ENCODE measurements at regions of chr22 and their contacts with region 1.

Region 1: DNA sequence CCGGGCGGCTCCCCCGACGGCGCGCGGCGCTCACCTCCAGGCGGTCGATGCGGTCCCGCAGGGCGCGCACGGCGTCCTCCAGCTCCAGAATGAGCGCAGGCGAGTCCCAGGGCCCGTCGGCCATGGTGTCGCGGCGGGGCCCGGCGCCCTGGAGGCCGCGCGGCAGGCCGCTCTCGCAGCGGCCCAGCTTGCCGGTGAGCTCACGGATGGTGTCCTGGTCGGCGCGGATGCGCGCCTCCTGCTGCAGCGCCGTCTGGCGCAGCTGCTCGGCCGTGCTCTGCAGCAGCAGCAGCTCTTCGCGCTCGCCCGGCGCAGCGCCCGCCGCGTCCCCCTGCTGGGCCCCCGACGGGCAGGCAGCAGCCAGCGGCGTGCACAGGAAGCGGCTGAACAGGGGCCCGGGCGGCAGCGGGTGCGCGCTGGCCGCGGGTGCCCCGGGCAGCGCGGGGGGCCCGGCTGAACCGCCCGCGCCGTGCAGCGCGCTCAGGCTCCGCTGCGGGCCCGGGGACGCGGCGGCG is 570 bp downstream of the NPTXR start:
- DNase-seq: peak; percentile 55 to 68
- ATAC-seq: peak; percentile 88 to 90
- H3K4me3 ChIP-seq: peak overlapping the region; percentile 74
- H3K27ac ChIP-seq: peak overlapping the region; percentile 69 to 94
- H3K4me1 ChIP-seq: peaks cover 22% of the 10 kb centered on the region; the same call in 2 of the 3 replicates
- CTCF ChIP-seq: peak; percentile 34; the same call in 2 of the 3 replicates
- EP300 ChIP-seq: no peak
- POLR2A ChIP-seq: no peak
- RAD21 ChIP-seq: peak in 1 of 2 experiments; percentile 45; a peak in 2 of 5 replicates

Region 2: DNA sequence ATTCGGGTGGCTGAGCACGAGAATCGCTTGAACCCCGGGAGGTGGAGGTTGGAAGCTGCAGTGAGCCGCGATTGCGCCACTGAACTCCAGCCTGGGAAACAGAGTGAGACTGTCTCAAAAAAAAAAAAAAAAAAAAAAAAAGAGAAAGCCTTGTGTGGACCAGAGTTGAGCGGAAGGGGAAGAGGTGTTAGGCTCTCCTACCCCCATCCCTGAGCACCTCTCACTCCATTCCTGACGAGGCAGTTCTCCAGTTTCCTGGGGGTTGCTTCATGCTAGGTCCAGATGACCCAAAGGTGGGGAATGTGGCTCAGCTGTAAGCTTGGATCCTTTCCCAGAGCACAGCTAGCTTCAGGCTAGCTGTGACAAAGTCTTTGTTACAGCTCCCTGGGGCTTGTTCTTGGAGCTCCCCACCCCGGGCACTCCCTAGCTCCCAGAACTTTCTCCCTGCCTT is 40.6 kb before region 1 on chr22:
- CTCF ChIA-PET with region 1: interaction called, 4 read pairs
- POLR2A ChIA-PET with region 1: interaction called, 13 read pairs
- DNase-seq: peak; percentile 79 to 86
- ATAC-seq: peak; percentile 95 to 99
- H3K4me3 ChIP-seq: no peak overlapping the region
- H3K27ac ChIP-seq: peak overlapping the region; percentile 75 to 80
- H3K4me1 ChIP-seq: peaks cover 19% of the 10 kb centered on the region
- CTCF ChIP-seq: no peak
- EP300 ChIP-seq: peak in 1 of 2 experiments; percentile 14; a peak in 1 of 5 replicates
- POLR2A ChIP-seq: no peak
- RAD21 ChIP-seq: peak in 1 of 2 experiments; percentile 26; a peak in 1 of 5 replicates

Region 3: GRCh38 chr22:38881464-38881871 is 38.2 kb after region 1 on chr22:
- CTCF ChIA-PET with region 1: no interaction called
- POLR2A ChIA-PET with region 1: no interaction called
- DNase-seq: no peak
- ATAC-seq: no peak; a peak in 1 of 6 replicates
- H3K4me3 ChIP-seq: no peak overlapping the region
- H3K27ac ChIP-seq: no peak overlapping the region
- H3K4me1 ChIP-seq: 0 out of 3 replicates have a peak, but pooled peaks cover 2% of the 10 kb centered on the region
- CTCF ChIP-seq: no peak
- EP300 ChIP-seq: no peak
- POLR2A ChIP-seq: no peak
- RAD21 ChIP-seq: no peak